Heart right ventricle (tissue), 16 donors: ENCODE measurements at regions of chr20 and their contacts with region 1.

Region 1: GRCh38 chr20:2172305-2173175 is 70.9 kb downstream of the STK35 start:
- DNase-seq: peak; percentile 64 to 72
- ATAC-seq: peak; percentile 46 to 90 (median 84)
- H3K4me3 ChIP-seq: no peak overlapping the region
- H3K27ac ChIP-seq: no peak overlapping the region
- H3K4me1 ChIP-seq: peaks cover 0 to 15% (median 4%) of the 10 kb centered on the region in 9 donors
- H3K27me3 ChIP-seq: peaks cover 0 to 6% (median 0%) of the 10 kb centered on the region in 7 donors
- CTCF ChIP-seq: peak; percentile 80 to 94 (median 91)

Region 2: GRCh38 chr20:1764136-1765033 is 408.2 kb before region 1 on chr20:
- intact Hi-C with region 1: loop called in 7 of 10 experiments (anchors 5 to 10 kb)
- DNase-seq: peak; percentile 67 to 75
- ATAC-seq: peak; percentile 75 to 94 (median 90)
- H3K4me3 ChIP-seq: no peak overlapping the region
- H3K27ac ChIP-seq: no peak overlapping the region
- H3K4me1 ChIP-seq: peaks cover 0 to 10% (median 3%) of the 10 kb centered on the region in 9 donors
- H3K27me3 ChIP-seq: peaks cover 0 to 5% (median 0%) of the 10 kb centered on the region in 7 donors
- CTCF ChIP-seq: peak; percentile 34 to 86 (median 74)

Region 3: GRCh38 chr20:1776681-1777475 is 395.7 kb before region 1 on chr20:
- intact Hi-C with region 1: loop called in 2 of 10 experiments (anchors 10 kb)
- DNase-seq: peak; percentile 88 to 90
- ATAC-seq: peak; percentile 94 to 100 (median 98)
- H3K4me3 ChIP-seq: peak overlapping the region; percentile 56 to 79 (median 71)
- H3K27ac ChIP-seq: peak overlapping the region in 8 of 10 donors; percentile 57 to 80 (median 70)
- H3K4me1 ChIP-seq: peaks cover 8 to 21% (median 10%) of the 10 kb centered on the region in 9 donors
- H3K27me3 ChIP-seq: peaks cover 0 to 3% (median 0%) of the 10 kb centered on the region in 7 donors
- CTCF ChIP-seq: peak; percentile 79 to 90 (median 84)

Region 4: DNA sequence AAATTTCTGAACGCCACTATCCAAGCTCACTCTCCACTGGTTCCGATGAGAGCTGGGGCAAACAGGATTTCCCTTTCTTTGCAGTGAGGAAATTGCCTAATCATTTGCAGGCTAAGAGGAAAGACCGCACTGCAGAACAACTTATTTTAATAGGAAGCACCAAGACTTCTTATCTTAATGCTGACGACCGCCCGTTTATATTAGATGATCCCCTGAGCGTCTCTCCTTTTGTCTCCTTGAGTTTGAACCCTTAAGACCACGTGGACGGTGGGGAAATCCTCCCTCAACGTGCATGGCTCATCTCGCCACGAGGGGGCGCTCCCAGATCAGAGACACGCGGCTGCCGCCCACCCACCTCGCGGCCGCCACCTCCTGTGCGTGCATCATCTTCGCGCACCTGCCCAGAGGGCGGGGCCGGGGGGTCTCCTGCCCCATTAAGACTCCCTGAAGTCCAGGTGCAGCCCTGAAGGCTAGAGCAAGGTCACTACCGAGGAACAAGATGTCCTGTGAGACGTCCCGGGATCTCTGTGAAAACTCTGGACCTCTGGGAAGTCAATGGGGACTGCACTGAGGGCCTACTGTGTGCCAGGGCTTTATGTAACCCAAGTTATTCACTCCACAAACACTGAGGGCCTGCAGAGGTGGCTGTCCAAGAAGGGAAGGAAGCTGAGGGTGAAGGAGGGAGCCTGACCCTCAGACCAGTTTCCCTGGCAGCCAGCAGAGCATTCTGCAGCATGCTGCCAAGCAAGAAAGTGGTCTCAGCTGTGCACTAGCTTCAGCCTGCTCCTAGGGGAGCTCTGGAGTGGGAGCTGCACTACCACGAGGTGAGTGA is 206.8 kb before region 1 on chr20:
- intact Hi-C with region 1: loop called (anchors 1 to 2 kb)
- DNase-seq: peak; percentile 71 to 75
- ATAC-seq: peak; percentile 72 to 90 (median 80)
- H3K4me3 ChIP-seq: peak overlapping the region in 4 of 10 donors; percentile 5 to 22 (median 13)
- H3K27ac ChIP-seq: peak overlapping the region in 2 of 10 donors; percentile 16 to 69
- H3K4me1 ChIP-seq: peaks cover 0 to 26% (median 10%) of the 10 kb centered on the region in 9 donors
- H3K27me3 ChIP-seq: peaks cover 0 to 28% (median 6%) of the 10 kb centered on the region in 7 donors
- CTCF ChIP-seq: peak; percentile 81 to 97 (median 94)

Region 5: GRCh38 chr20:2086177-2086979 is 86.2 kb before region 1 on chr20:
- intact Hi-C with region 1: loop called (anchors 1 to 10 kb)
- DNase-seq: no peak
- ATAC-seq: peak in 5 of 8 donors; percentile 51 to 70 (median 62)
- H3K4me3 ChIP-seq: no peak overlapping the region
- H3K27ac ChIP-seq: no peak overlapping the region
- H3K4me1 ChIP-seq: no peaks in the 10 kb centered on the region
- H3K27me3 ChIP-seq: peaks cover 0 to 41% (median 17%) of the 10 kb centered on the region in 7 donors
- CTCF ChIP-seq: peak in 7 of 9 donors; percentile 20 to 47 (median 38)

Region 6: DNA sequence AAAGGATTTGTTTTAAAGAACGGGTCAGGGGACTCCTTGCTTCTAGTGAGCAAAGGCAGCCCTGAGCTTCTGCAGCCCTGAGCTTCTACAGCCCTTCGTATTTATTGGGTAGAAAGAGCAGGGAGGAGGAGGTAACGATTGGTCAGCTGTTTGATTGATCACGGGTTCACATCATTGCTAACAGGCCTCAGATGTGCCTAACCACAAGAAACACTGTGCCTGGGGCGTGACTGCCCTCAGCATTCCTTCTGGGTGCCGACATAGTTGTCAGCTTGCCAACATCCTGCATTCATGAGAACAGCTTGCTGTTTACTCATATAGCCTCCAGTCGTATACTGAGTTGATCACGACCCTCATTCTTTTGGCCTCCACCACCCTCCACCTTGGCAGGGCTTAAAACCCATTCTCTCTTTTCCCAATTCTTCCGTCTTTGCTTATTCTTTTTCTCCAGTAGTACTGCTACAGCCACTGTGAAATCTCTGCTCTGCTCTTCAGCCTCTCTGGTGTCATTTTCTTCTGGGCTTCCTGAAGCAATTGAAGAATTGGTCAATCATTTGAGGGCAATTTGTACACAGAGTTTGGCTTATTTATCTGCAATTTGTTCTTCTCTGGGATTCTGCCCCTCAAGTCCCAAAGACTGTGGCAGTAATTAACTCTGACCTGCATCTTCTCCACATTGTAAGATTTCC is 454.5 kb after region 1 on chr20:
- intact Hi-C with region 1: no loop called
- DNase-seq: no peak
- ATAC-seq: no peak
- H3K4me3 ChIP-seq: no peak overlapping the region
- H3K27ac ChIP-seq: no peak overlapping the region
- H3K4me1 ChIP-seq: no peaks in the 10 kb centered on the region
- H3K27me3 ChIP-seq: peaks cover 0 to 14% (median 0%) of the 10 kb centered on the region in 7 donors
- CTCF ChIP-seq: no peak